Activated naive CD4-positive, alpha-beta T cell treated with anti-CD3 and anti-CD28 coated beads for 36 hours (primary cell): ENCODE measurements at regions of chr14 and their contacts with region 1.

Region 1: DNA sequence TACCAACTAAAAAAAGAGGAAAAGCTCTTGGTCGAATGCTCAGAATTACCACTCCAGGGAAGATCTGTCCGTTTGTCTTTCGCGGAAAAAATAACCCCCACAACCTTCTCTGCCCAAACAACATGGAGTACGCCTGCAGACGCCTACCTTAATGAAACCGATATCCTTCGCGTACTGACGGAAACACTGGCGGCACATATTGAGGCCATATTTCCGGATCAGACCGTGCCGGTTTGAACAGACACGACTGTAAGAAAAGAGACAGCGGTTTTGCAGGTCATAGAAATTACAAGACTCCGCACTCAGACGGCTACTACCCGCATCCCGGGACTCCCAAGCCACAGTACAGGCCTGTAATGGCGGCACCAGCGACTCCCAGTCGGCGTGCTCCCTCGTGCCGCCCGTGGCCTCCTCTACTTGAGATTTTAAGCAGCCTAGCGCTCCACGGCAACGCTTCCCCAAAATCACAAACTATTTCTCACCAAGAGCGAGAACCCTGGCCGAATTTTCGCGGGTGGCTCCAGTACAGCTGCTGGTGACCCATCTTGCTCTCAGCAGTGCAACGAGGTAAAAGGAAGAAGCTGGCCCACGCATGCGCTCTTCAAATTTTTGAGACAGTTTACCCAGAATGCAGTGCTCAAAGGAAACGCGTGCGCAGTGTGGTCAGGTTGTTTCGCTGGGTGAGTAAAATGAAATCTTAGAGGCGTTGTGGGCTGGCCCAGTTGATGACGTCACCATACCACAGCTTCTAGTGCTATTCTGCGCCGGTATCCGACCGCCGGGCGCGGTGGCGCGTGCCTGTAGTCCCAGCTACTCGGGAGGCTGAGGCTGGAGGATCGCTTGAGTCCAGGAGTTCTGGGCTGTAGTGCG is at the start of gene RPS29:
- DNase-seq: peak; percentile 99
- H3K4me3 Mint-ChIP-seq: peak within 1 kb of the TSS; percentile 87
- H3K27ac Mint-ChIP-seq: peak within 1 kb of the TSS; percentile 98
- H3K4me1 Mint-ChIP-seq: peaks cover 40% of the 10 kb centered on the region
- H3K27me3 Mint-ChIP-seq: peaks cover 3% of the 10 kb centered on the region
- total RNA-seq, gene RPS29: 1,858 to 2,382 TPM

Region 2: DNA sequence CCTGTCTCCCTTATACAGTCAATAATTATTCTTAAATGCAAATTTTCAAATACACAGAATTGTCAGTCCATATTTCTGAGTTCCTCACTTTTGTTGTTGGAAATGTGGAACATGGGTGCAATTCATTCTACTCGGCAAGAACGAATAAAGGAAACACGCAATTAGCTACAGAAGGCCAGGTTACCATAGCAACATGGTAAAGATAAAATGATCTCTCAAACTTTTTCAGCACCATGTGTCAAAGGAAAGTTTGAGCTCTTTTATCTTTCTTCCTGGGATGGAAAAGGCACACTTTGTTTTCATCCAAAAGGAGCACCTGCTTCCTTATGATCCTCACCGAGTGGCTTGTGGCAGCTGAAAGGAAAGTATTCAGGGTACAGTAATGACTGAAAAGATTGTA is 594.9 kb before region 1 on chr14:
- CTCF ChIA-PET with region 1: no interaction called
- intact Hi-C with region 1: no loop called
- DNase-seq: no peak
- H3K4me3 Mint-ChIP-seq: no peak overlapping the region
- H3K27ac Mint-ChIP-seq: no peak overlapping the region
- H3K4me1 Mint-ChIP-seq: no peaks in the 10 kb centered on the region
- H3K27me3 Mint-ChIP-seq: no peaks in the 10 kb centered on the region

Region 3: GRCh38 chr14:49598485-49599300 is 12.7 kb after region 1 on chr14 and contains the start of gene LRR1:
- CTCF ChIA-PET with region 1: interaction called, 33 read pairs
- intact Hi-C with region 1: loop called (anchors 1 kb)
- DNase-seq: peak; percentile 87
- H3K4me3 Mint-ChIP-seq: peak within 1 kb of the TSS; percentile 99
- H3K27ac Mint-ChIP-seq: peak within 1 kb of the TSS; percentile 99
- H3K4me1 Mint-ChIP-seq: peaks cover 20% of the 10 kb centered on the region
- H3K27me3 Mint-ChIP-seq: no peaks in the 10 kb centered on the region
- total RNA-seq, gene LRR1: 47.7 to 49.1 TPM

Region 4: DNA sequence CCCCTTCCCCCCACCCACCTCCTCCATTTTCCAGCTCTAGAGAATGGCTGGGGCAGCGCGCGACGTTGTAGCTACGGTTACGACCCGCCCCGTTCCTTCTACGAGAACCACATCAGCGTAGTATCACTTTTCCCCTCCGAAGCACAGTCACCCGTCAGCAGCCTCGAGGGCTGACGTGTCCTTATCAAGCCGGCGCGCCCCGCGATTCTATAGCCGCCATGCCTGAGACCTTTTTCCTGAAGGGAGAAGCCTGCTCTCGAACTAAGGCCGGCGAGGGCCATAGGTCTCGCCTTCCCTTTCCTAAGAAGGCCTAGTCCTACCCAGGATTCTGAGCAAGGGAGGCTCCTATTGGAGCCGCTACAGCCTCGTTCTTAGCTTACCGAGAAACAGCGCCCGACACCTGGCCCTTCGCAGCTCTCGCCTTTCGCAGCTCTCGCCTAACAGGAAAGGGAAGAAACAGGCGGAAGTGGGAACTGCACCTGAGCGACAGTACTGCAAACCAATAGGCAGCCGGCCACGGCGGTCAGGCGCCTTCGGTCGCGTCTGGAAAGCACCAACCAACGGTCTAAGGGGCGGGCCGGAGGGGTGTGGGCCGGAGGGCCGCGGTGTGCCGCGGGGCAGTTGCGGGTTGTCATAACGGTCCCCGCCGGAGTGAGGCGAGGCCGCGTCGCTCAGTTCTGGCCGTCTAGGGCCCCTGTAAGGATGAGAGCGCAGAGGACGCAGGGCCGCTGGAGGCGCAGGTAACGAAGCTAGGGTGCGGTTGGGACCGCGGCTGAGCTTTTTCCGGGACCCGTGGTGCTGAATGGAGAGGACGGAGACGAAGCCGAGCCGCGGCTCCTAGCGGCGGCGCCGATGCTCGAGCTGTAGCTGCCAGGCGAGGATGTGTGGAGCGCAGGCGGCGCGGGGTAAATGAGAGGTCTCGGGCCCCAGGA is 34.4 kb after region 1 on chr14 and contains the starts of genes MGAT2 and RPL36AL:
- CTCF ChIA-PET with region 1: interaction called, 12 read pairs
- intact Hi-C with region 1: loop called (anchors 1 kb)
- DNase-seq: peak; percentile 97
- H3K4me3 Mint-ChIP-seq: peak within 1 kb of the TSS; percentile 97
- H3K27ac Mint-ChIP-seq: peak within 1 kb of the TSS; percentile 97
- H3K4me1 Mint-ChIP-seq: peaks cover 52% of the 10 kb centered on the region
- H3K27me3 Mint-ChIP-seq: no peaks in the 10 kb centered on the region
- total RNA-seq, gene MGAT2: 20.6 to 20.7 TPM
- total RNA-seq, gene RPL36AL: 250 to 266 TPM

Region 5: GRCh38 chr14:49692811-49693734 is 107.0 kb after region 1 on chr14 and contains the start of gene KLHDC1:
- CTCF ChIA-PET with region 1: interaction called, 3 read pairs
- intact Hi-C with region 1: loop called (anchors 1 kb)
- DNase-seq: peak; percentile 84
- H3K4me3 Mint-ChIP-seq: peak within 1 kb of the TSS; percentile 81
- H3K27ac Mint-ChIP-seq: peak within 1 kb of the TSS; percentile 62
- H3K4me1 Mint-ChIP-seq: peaks cover 34% of the 10 kb centered on the region
- H3K27me3 Mint-ChIP-seq: no peaks in the 10 kb centered on the region
- total RNA-seq, gene KLHDC1: 0.57 to 0.79 TPM